ENCODE measurements at regions of chr14 and their contacts with region 1.

Region 1: GRCh38 chr14:93788543-93789227 is 400 bp upstream of the PRIMA1 start:
- DNase-seq: peak; percentile 38 to 68 (median 50)
- ATAC-seq: peak; percentile 75 to 92 (median 88)
- H3K4me3 ChIP-seq: peak overlapping the region; percentile 37 to 69 (median 57)
- H3K27ac ChIP-seq: peak overlapping the region in 10 of 12 donors; percentile 14 to 86 (median 64)
- H3K4me1 ChIP-seq: peaks cover 0 to 24% (median 5%) of the 10 kb centered on the region in 12 donors
- H3K27me3 ChIP-seq: peaks cover 0 to 35% (median 2%) of the 10 kb centered on the region in 9 donors
- CTCF ChIP-seq: peak in 10 of 12 donors; percentile 26 to 60 (median 51)
- POLR2A ChIP-seq: peak in 1 of 2 donors; percentile 51

Region 2: GRCh38 chr14:93510066-93510465 is 278.6 kb before region 1 on chr14:
- intact Hi-C with region 1: no loop called
- DNase-seq: no peak
- ATAC-seq: no peak
- H3K4me3 ChIP-seq: no peak overlapping the region
- H3K27ac ChIP-seq: peak overlapping the region in 1 of 12 donors; percentile 28
- H3K4me1 ChIP-seq: no peaks in the 10 kb centered on the region
- H3K27me3 ChIP-seq: no peaks in the 10 kb centered on the region
- CTCF ChIP-seq: no peak
- POLR2A ChIP-seq: no peak

Region 3: GRCh38 chr14:93655078-93655750 is 133.5 kb before region 1 on chr14:
- intact Hi-C with region 1: loop called (anchors 1 to 10 kb)
- DNase-seq: no peak
- ATAC-seq: peak in 2 of 4 donors; percentile 41 to 42
- H3K4me3 ChIP-seq: no peak overlapping the region
- H3K27ac ChIP-seq: no peak overlapping the region
- H3K4me1 ChIP-seq: peaks cover 0 to 5% (median 0%) of the 10 kb centered on the region in 12 donors
- H3K27me3 ChIP-seq: peaks cover 0 to 4% (median 0%) of the 10 kb centered on the region in 9 donors
- CTCF ChIP-seq: peak; percentile 37 to 69 (median 51)
- POLR2A ChIP-seq: no peak

Region 4: GRCh38 chr14:93663317-93663716 is 125.4 kb before region 1 on chr14:
- intact Hi-C with region 1: loop called in 2 of 10 experiments (anchors 2 to 10 kb)
- DNase-seq: no peak
- ATAC-seq: no peak
- H3K4me3 ChIP-seq: no peak overlapping the region
- H3K27ac ChIP-seq: no peak overlapping the region
- H3K4me1 ChIP-seq: no peaks in the 10 kb centered on the region
- H3K27me3 ChIP-seq: no peaks in the 10 kb centered on the region
- CTCF ChIP-seq: no peak
- POLR2A ChIP-seq: no peak

Region 5: DNA sequence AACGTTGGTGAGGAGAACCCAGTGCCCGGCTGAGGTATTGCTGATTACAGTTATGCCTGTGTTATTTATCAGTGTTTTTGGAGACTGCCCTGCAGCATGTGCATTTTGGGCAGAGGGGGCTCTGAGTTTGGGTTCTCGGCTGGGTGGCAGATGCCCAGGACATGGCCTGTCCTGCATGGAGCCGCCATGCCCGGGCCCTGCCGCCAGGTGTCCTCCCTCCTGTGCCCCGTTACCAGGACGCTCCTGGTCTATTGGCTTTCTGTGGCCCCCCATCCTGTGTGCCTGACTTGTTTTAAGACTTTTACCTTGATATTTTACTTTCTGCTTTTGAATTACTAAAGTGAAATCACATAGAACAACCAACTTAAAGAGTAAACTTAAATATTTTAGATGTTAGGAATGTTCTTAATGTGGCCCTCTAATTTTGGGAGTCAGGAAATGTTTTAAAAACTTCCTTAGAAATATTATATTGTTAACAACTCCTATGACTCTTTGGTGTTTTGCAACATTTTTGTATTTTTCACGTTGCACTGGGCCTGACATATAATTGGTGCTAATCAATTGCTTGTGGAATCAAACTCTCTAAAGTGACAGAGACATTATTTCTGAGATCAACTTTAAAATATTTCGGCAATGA is 52.2 kb before region 1 on chr14:
- intact Hi-C with region 1: loop called in 6 of 10 experiments (anchors 1 to 5 kb)
- DNase-seq: peak in 2 of 5 donors; percentile 29 to 57
- ATAC-seq: peak in 2 of 4 donors; percentile 44 to 64
- H3K4me3 ChIP-seq: no peak overlapping the region
- H3K27ac ChIP-seq: no peak overlapping the region
- H3K4me1 ChIP-seq: no peaks in the 10 kb centered on the region
- H3K27me3 ChIP-seq: no peaks in the 10 kb centered on the region
- CTCF ChIP-seq: peak in 10 of 12 donors; percentile 16 to 48 (median 37)
- POLR2A ChIP-seq: no peak

Region 6: GRCh38 chr14:93742761-93743160 is 45.9 kb before region 1 on chr14:
- intact Hi-C with region 1: loop called in 7 of 10 experiments (anchors 2 to 5 kb)
- DNase-seq: peak in 4 of 5 donors; percentile 46 to 86 (median 54)
- ATAC-seq: peak; percentile 83 to 93 (median 88)
- H3K4me3 ChIP-seq: no peak overlapping the region
- H3K27ac ChIP-seq: peak overlapping the region; percentile 6 to 86 (median 63)
- H3K4me1 ChIP-seq: peaks cover 0 to 30% (median 12%) of the 10 kb centered on the region in 12 donors
- H3K27me3 ChIP-seq: no peaks in the 10 kb centered on the region
- CTCF ChIP-seq: no peak
- POLR2A ChIP-seq: no peak

Region 7: DNA sequence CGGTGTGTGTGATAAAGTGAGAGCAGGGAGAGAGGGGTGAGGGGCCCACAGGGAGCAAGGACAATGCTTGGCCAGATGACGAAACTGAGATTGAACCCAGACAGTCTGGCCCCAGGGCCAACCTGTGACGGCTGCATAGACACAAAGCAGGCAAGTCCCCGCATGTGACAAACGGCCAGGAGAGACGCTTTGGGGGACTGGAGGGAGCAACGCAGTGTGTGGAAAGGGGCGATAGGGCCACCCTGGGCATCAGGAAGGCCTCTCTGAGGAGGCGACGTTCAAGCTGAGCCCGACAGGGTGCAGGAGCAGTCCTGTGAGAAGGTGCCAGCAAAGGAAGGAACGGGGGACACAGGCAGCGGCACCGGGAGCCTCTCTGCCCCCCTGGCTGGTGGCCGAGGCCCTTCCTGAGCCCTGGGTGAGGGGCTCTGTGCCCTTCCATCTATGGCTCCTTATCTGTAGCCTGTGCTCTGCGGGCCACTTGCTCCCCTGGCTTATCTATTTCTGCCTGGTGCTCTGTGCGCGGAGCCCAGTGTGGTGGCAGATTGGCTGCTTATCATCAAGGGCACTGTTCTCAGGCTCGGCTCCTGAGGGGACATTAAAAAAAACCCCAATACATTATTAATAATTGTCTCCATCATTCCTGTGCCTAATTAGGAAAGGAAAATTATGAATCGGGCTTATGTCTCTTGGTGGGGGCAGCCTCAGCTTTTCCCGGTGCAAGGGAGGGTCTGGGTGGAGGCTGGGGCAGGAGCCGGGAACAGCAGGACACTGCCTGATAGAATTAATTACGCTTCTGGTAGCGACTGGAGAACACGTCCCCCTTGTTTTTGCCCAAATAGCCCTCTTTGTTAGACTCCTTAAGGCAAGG is 40.2 kb before region 1 on chr14:
- intact Hi-C with region 1: loop called in 4 of 10 experiments (anchors 2 to 5 kb)
- DNase-seq: peak in 4 of 5 donors; percentile 46 to 86 (median 67)
- ATAC-seq: peak; percentile 78 to 83 (median 80)
- H3K4me3 ChIP-seq: peak overlapping the region in 1 of 12 donors; percentile 4
- H3K27ac ChIP-seq: peak overlapping the region; percentile 73 to 99 (median 85)
- H3K4me1 ChIP-seq: peaks cover 0 to 47% (median 17%) of the 10 kb centered on the region in 12 donors
- H3K27me3 ChIP-seq: no peaks in the 10 kb centered on the region
- CTCF ChIP-seq: no peak
- POLR2A ChIP-seq: no peak

Region 8: GRCh38 chr14:93892923-93893558 is 104.4 kb after region 1 on chr14:
- intact Hi-C with region 1: loop called in 4 of 10 experiments (anchors 5 to 10 kb)
- DNase-seq: peak; percentile 58 to 82 (median 63)
- ATAC-seq: peak; percentile 21 to 72 (median 54)
- H3K4me3 ChIP-seq: peak overlapping the region in 2 of 12 donors; percentile 7 to 21
- H3K27ac ChIP-seq: no peak overlapping the region
- H3K4me1 ChIP-seq: peaks cover 0 to 11% (median 1%) of the 10 kb centered on the region in 12 donors
- H3K27me3 ChIP-seq: peaks cover 0 to 14% (median 0%) of the 10 kb centered on the region in 9 donors
- CTCF ChIP-seq: peak; percentile 92 to 99 (median 98)
- POLR2A ChIP-seq: no peak

Measured in heart left ventricle (tissue), 16 donors.